B cell (primary cell): ENCODE measurements at regions of chr15 and their contacts with region 1.

Region 1: DNA sequence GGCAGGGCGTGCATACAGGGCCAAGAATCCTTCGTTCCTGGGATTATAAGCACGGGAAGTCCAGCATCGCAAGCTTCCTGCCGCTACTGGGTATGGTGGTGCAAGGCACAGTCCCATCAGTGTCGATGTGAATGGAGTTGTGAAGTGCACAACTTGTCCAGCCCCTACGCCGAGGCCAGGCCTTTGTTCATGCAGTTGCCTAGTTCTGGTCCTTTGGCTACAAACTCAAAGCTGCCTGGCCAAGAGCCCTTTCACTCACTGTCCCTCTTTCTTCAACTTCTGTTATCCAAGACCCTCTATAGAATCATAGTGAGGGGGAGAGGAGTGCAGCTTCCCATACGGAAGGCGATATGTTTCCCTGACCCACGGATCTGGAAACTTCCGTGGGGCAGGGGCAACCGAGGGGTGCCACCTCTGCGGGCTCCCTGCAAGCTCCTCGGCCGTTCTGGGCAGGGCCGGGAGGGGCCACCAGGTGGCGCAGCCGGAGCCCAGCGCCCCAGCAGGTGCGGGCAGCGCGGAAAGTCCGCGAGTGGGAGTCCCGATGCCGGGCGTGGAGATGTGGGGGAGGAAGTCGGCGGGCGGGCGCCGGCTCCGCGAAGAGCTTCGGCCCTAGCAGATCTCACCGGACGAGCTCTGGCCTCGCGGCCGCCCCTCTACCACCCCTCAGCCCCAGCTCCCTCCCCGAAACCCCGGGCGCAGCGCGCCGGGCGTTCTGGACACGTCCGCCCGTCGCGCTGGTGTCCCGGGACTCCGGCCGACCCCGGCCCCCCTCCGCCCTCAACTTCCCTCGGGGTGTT is 693 bp downstream of the RASGRP1 start:
- DNase-seq: peak; percentile 90
- ATAC-seq: peak; percentile 79
- H3K4me3 ChIP-seq: peak overlapping the region; percentile 56 to 85 (median 78)
- H3K4me3 Mint-ChIP-seq: peak overlapping the region; percentile 96
- H3K27ac ChIP-seq: peak overlapping the region; percentile 84 to 88
- H3K27ac Mint-ChIP-seq: peak overlapping the region; percentile 90
- H3K4me1 ChIP-seq: peaks cover 44 to 49% of the 10 kb centered on the region in 2 donors
- H3K4me1 Mint-ChIP-seq: peaks cover 56% of the 10 kb centered on the region
- H3K27me3 ChIP-seq: no peaks in the 10 kb centered on the region
- H3K27me3 Mint-ChIP-seq: no peaks in the 10 kb centered on the region
- CTCF ChIP-seq: peak; percentile 89

Region 2: GRCh38 chr15:38440353-38441129 is 123.4 kb before region 1 on chr15:
- CTCF ChIA-PET with region 1: interaction called, 26 read pairs
- POLR2A ChIA-PET with region 1: no interaction called
- intact Hi-C with region 1: no loop called
- DNase-seq: peak; percentile 76
- ATAC-seq: peak; percentile 95
- H3K4me3 ChIP-seq: no peak overlapping the region
- H3K4me3 Mint-ChIP-seq: no peak overlapping the region
- H3K27ac ChIP-seq: no peak overlapping the region
- H3K27ac Mint-ChIP-seq: no peak overlapping the region
- H3K4me1 ChIP-seq: peaks cover 0 to 5% of the 10 kb centered on the region in 2 donors
- H3K4me1 Mint-ChIP-seq: peaks cover 2% of the 10 kb centered on the region
- H3K27me3 ChIP-seq: peaks cover 0 to 2% (median 0%) of the 10 kb centered on the region in 4 experiments
- H3K27me3 Mint-ChIP-seq: peaks cover 39% of the 10 kb centered on the region
- CTCF ChIP-seq: peak; percentile 97

Region 3: GRCh38 chr15:38461066-38461833 is 102.7 kb before region 1 on chr15:
- CTCF ChIA-PET with region 1: interaction called, 10 read pairs
- POLR2A ChIA-PET with region 1: no interaction called
- intact Hi-C with region 1: no loop called
- DNase-seq: no peak
- ATAC-seq: peak; percentile 41
- H3K4me3 ChIP-seq: no peak overlapping the region
- H3K4me3 Mint-ChIP-seq: no peak overlapping the region
- H3K27ac ChIP-seq: no peak overlapping the region
- H3K27ac Mint-ChIP-seq: no peak overlapping the region
- H3K4me1 ChIP-seq: peaks cover 0 to 7% of the 10 kb centered on the region in 2 donors
- H3K4me1 Mint-ChIP-seq: peaks cover 30% of the 10 kb centered on the region
- H3K27me3 ChIP-seq: no peaks in the 10 kb centered on the region
- H3K27me3 Mint-ChIP-seq: no peaks in the 10 kb centered on the region
- CTCF ChIP-seq: no peak

Region 4: DNA sequence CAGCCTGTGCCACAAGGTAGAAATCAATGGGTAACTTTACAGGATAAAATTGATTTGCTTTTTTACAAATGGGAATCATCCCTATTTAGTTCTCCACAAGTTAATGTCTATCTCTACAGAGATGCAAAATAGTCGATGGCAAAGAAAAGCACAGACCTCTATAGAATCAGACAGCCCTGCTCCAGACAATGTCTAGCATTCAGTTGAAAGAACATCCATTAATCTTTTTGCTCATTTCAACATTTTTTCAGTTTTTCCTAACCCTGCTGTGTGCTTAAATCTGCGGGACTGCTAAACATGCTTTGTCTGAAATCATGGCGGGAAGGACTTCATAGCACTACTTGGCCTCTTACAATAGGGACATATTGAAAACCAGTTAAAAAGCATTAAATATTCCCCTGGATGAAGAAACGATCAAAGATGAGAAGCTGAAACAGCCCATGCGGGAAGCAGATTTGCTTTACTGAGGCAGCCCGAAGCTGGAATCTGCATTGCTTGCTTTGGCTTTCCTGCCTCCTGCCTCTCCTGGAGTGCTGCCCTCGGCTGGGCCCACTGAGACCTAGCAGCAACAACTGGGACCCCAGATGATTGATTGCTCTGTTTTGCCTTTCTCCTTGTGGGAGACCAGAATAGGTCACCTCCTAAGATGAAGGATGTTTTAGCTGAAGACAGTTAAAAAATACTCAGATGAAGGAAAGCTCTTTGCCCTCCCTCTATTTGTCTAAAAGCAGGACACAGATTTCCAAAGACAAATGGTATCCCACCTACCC is 39.2 kb after region 1 on chr15:
- CTCF ChIA-PET with region 1: interaction called, 14 read pairs
- POLR2A ChIA-PET with region 1: no interaction called
- intact Hi-C with region 1: no loop called
- DNase-seq: no peak
- ATAC-seq: no peak
- H3K4me3 ChIP-seq: no peak overlapping the region
- H3K4me3 Mint-ChIP-seq: no peak overlapping the region
- H3K27ac ChIP-seq: no peak overlapping the region
- H3K27ac Mint-ChIP-seq: no peak overlapping the region
- H3K4me1 ChIP-seq: peaks cover 8 to 14% of the 10 kb centered on the region in 2 donors
- H3K4me1 Mint-ChIP-seq: peaks cover 21% of the 10 kb centered on the region
- H3K27me3 ChIP-seq: no peaks in the 10 kb centered on the region
- H3K27me3 Mint-ChIP-seq: no peaks in the 10 kb centered on the region
- CTCF ChIP-seq: no peak

Region 5: GRCh38 chr15:38647683-38648082 is 83.8 kb after region 1 on chr15:
- CTCF ChIA-PET with region 1: interaction called, 71 read pairs
- POLR2A ChIA-PET with region 1: interaction called, 5 read pairs
- intact Hi-C with region 1: loop called (anchors 5 kb)
- DNase-seq: no peak
- ATAC-seq: no peak
- H3K4me3 ChIP-seq: no peak overlapping the region
- H3K4me3 Mint-ChIP-seq: no peak overlapping the region
- H3K27ac ChIP-seq: no peak overlapping the region
- H3K27ac Mint-ChIP-seq: no peak overlapping the region
- H3K4me1 ChIP-seq: peaks cover 39 to 40% of the 10 kb centered on the region in 2 donors
- H3K4me1 Mint-ChIP-seq: peaks cover 60% of the 10 kb centered on the region
- H3K27me3 ChIP-seq: no peaks in the 10 kb centered on the region
- H3K27me3 Mint-ChIP-seq: no peaks in the 10 kb centered on the region
- CTCF ChIP-seq: no peak

Region 6: DNA sequence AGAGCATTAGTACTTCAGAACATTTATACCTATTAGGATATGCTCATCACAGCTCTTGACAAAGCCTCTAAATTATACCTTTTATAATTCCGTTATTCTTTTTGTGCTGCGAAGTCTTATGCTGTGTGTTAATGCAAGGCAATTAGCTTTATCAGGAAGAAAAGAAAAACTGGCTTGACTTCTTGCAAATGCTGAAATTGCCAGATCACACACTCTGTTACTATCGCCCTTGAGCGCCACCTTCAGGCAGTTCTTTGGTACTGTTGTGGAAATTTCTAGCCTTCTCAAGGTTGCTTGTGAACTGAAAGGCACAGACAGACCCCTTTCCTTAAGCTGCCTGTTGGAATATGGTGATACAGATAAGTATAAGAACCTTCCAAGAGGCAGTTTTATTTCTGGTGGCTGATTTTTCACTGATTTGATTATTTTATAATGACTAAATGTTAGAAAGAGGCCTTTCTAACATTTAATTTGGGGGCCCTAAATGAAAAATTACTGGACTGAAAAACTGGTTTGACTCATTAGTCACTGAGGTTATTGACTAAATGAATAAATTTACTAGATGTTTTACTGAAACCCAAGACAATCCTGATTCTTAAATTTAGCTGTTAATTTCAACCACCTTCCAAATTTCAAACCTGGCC is 126.9 kb after region 1 on chr15:
- CTCF ChIA-PET with region 1: interaction called, 546 read pairs
- POLR2A ChIA-PET with region 1: interaction called, 4 read pairs
- intact Hi-C with region 1: loop called (anchors 2 kb)
- DNase-seq: peak; percentile 82
- ATAC-seq: peak; percentile 86
- H3K4me3 ChIP-seq: no peak overlapping the region
- H3K4me3 Mint-ChIP-seq: no peak overlapping the region
- H3K27ac ChIP-seq: no peak overlapping the region
- H3K27ac Mint-ChIP-seq: no peak overlapping the region
- H3K4me1 ChIP-seq: peaks cover 0 to 3% of the 10 kb centered on the region in 2 donors
- H3K4me1 Mint-ChIP-seq: peaks cover 12% of the 10 kb centered on the region
- H3K27me3 ChIP-seq: no peaks in the 10 kb centered on the region
- H3K27me3 Mint-ChIP-seq: no peaks in the 10 kb centered on the region
- CTCF ChIP-seq: peak; percentile 94